ENCODE measurements at regions of chr17 and their contacts with region 1.

Region 1: DNA sequence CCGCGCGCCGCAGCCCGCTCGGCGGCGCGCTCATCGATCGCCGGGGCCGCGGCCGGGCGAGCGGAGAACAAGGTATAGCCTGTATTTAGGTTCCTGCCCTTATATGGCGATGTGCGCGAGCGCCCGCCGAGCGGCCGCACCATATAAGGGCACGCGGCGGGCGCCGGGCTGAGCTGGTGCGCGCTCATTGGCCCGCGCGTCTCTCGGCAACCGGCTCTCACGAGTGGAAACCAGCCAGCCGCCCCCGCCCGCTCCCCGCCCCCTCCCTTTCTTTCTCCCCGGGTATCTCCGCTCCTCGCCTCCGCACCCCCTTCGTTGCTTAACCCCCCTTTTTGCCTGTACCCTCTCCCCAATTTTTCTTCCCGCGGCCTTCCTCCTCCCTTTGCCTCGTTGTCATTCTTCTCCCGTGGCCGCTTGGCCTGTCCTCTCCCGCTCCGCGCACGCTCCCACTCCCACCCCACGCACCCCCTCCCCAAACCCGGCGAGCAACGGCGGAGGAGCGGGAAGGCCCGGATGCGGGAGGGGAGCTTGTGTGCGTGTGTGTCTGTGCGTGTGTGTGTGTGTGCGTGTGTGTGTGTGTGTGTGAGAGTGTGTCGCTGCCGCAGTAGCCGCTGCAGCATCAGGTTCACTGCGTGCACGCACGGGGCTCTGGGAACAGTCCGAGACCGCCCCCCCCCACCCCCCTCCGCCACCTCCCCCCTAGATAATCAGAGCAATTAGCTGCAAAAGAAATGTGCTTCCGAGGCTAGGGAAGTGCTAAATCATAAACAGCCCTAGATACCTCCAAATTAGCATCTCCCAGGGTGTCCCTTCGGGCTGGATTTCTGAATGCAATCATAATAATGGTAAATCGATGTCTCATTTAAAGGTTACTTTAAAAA is 13.5 kb upstream of the CBX8 start:
- DNase-seq: peak; percentile 60 to 73
- ATAC-seq: peak; percentile 66 to 88 (median 78)
- H3K4me3 ChIP-seq: peak overlapping the region in 9 of 10 donors; percentile 5 to 39 (median 31)
- H3K27ac ChIP-seq: no peak overlapping the region
- H3K4me1 ChIP-seq: peaks cover 20 to 61% (median 43%) of the 10 kb centered on the region in 9 donors
- H3K27me3 ChIP-seq: peaks cover 48 to 96% (median 93%) of the 10 kb centered on the region in 7 donors
- CTCF ChIP-seq: no peak

Region 2: GRCh38 chr17:79515646-79516571 is 294.5 kb before region 1 on chr17:
- intact Hi-C with region 1: no loop called
- DNase-seq: no peak
- ATAC-seq: no peak
- H3K4me3 ChIP-seq: no peak overlapping the region
- H3K27ac ChIP-seq: no peak overlapping the region
- H3K4me1 ChIP-seq: no peaks in the 10 kb centered on the region
- H3K27me3 ChIP-seq: peaks cover 0 to 60% (median 47%) of the 10 kb centered on the region in 7 donors
- CTCF ChIP-seq: no peak

Region 3: DNA sequence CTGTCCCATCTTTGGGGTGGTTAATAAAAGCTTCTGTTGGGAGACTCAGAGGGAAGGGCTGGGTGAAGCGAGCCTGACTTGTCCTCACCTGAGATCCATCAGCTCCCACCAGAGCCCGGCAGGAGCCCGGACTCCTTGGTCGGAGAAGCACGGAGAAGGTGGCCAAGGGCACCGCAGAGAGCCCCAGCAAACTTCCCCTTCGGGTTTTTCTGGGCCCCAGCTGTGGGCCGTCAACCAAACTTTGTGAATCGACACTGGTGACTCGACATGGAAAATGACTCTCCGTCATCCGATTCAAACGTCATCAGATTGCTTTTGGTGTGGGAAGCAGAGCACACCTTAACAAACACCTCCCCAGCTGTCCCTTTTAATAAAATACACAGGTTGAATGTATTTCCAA is 58.2 kb before region 1 on chr17:
- intact Hi-C with region 1: no loop called
- DNase-seq: no peak
- ATAC-seq: no peak
- H3K4me3 ChIP-seq: no peak overlapping the region
- H3K27ac ChIP-seq: no peak overlapping the region
- H3K4me1 ChIP-seq: peaks cover 0 to 9% (median 7%) of the 10 kb centered on the region in 9 donors
- H3K27me3 ChIP-seq: peaks cover 18 to 94% (median 84%) of the 10 kb centered on the region in 7 donors
- CTCF ChIP-seq: no peak

Region 4: DNA sequence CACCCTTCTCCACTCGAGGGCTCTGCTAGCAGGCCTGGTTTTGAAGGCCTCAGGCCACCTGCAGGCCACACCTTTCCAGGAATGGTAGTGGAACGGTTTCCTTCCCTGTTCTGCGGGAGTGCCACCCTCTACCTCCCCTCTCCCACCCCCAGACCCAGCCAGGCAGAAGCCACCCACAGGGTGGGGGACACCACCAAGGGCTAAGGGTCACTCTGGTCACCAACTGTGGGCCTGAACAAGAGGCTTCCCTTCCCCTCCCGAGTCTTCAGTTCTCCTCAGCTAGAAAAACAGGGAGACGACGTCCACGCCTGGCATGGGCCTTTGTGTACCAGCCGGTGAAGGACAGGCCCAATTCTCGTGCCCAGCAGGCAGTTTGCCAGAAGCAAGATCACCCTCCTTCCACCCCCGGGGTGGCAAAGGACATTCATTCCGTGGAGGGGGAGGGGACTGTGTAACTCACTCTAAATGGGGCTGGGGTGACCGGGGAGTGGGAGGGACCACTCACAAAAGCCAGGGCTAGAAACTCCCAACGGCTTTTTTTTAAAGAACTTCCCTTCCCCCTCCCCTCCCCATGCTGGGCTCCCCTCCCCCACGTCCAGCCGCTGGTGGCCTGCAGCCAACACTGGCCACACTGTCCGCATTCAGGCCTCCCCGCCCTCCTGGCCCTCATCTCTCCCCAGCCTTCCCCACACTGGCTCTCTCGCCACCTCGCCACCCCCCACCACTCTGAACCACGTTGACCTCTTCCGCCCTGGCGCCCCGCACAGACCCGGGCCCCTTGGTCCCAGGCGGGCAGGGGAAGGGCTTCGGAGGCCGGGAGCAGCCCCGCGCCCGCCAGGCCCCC is 21.2 kb after region 1 on chr17:
- intact Hi-C with region 1: loop called in 2 of 10 experiments (anchors 2 kb)
- DNase-seq: peak; percentile 73 to 75
- ATAC-seq: peak; percentile 48 to 77 (median 69)
- H3K4me3 ChIP-seq: peak overlapping the region; percentile 1 to 51 (median 45)
- H3K27ac ChIP-seq: peak overlapping the region; percentile 56 to 87 (median 80)
- H3K4me1 ChIP-seq: peaks cover 14 to 71% (median 43%) of the 10 kb centered on the region in 9 donors
- H3K27me3 ChIP-seq: no peaks in the 10 kb centered on the region
- CTCF ChIP-seq: no peak

Region 5: DNA sequence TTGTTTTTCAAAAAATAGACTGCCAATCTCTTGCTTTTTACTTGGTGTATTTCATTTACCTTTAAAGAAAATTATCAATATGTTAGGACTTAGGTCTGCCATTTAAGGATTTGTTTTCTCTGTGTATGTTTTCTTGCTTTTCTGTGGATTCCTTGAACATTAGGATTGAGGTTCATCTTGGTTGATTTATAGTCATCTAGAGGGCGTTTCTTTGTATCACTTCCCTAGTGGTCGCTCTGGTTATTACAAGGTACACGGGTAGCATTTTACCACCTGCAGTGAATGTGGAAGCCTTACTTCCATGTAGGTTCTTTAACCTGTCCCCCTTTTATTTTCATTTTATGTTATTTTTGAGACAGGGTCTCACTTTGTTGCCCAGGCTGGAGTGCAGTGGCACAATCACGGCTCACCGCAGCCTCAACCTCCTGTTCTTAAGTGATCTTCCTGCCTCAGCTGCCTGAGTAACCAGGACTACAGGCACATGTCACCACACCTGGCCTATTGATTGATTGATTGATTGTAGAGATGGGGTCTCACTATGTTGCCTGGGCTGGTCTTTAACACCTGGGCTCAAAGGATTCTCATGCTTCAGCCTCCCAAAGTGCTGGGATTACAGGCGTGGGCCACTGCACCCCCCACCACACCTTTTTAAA is 64.1 kb after region 1 on chr17:
- intact Hi-C with region 1: no loop called
- DNase-seq: no peak
- ATAC-seq: no peak
- H3K4me3 ChIP-seq: no peak overlapping the region
- H3K27ac ChIP-seq: no peak overlapping the region
- H3K4me1 ChIP-seq: no peaks in the 10 kb centered on the region
- H3K27me3 ChIP-seq: peaks cover 0 to 37% (median 18%) of the 10 kb centered on the region in 7 donors
- CTCF ChIP-seq: peak in 8 of 9 donors; percentile 12 to 56 (median 50)

Region 6: GRCh38 chr17:79965806-79966205 is 155.4 kb after region 1 on chr17:
- intact Hi-C with region 1: no loop called
- DNase-seq: no peak
- ATAC-seq: no peak
- H3K4me3 ChIP-seq: no peak overlapping the region
- H3K27ac ChIP-seq: no peak overlapping the region
- H3K4me1 ChIP-seq: no peaks in the 10 kb centered on the region
- H3K27me3 ChIP-seq: no peaks in the 10 kb centered on the region
- CTCF ChIP-seq: no peak